ENCODE measurements at regions of chr2 and their contacts with region 1.

Region 1: GRCh38 chr2:217756375-217757107 is 246.3 kb downstream of the TNS1 start:
- DNase-seq: peak; percentile 29
- ATAC-seq: peak; percentile 95
- H3K4me3 ChIP-seq: no peak overlapping the region
- H3K27ac ChIP-seq: no peak overlapping the region
- H3K4me1 ChIP-seq: no peaks in the 10 kb centered on the region
- H3K27me3 ChIP-seq: peaks cover 1 to 20% of the 10 kb centered on the region in 2 experiments; a peak in 3 of 5 replicates
- CTCF ChIP-seq: peak; percentile 89
- EP300 ChIP-seq: no peak
- POLR2A ChIP-seq: no peak
- RAD21 ChIP-seq: peak; percentile 66

Region 2: GRCh38 chr2:216687646-216688045 is 1068.9 kb before region 1 on chr2:
- CTCF ChIA-PET with region 1: interaction called, 7 read pairs
- POLR2A ChIA-PET with region 1: no interaction called
- in situ Hi-C with region 1: loop called (anchors 10 kb)
- intact Hi-C with region 1: loop called (anchors 5 kb)
- DNase-seq: peak; percentile 13
- ATAC-seq: peak; percentile 69
- H3K4me3 ChIP-seq: no peak overlapping the region
- H3K27ac ChIP-seq: no peak overlapping the region
- H3K4me1 ChIP-seq: no peaks in the 10 kb centered on the region
- H3K27me3 ChIP-seq: peaks cover 20 to 40% of the 10 kb centered on the region in 2 experiments
- CTCF ChIP-seq: peak; percentile 58
- EP300 ChIP-seq: no peak
- POLR2A ChIP-seq: no peak
- RAD21 ChIP-seq: 0 out of 2 replicates have a peak, but pooled peaks have one; percentile 26

Region 3: DNA sequence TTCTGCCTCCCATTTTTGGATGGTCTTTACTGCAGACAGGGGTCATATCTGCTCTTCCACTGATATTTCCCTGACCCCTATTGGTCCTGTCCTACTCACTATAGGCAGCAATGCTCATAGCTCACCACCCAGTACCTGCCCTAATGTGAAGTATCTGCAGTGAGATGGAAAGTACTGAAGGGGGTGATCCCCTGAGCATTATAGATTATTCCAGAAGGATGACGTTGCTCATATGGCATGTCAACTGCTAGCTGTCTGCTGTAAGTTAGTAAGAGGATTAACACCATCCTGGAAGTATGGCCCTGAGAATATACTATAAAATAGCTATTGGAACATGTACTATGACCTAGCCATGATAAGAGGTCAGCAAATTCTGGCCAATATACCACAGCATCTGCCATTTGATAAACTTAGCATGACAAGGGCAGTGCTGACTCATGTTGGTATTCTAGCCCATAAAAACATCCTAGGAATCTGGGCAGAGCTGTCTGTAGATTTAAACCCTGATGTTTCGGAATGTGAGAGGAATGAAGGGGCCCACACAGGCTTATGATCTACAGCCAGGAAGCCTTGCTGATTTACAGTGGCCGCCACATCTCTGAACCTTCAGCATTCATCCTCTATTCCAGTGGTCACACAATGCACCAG is 205.2 kb before region 1 on chr2:
- CTCF ChIA-PET with region 1: no interaction called
- POLR2A ChIA-PET with region 1: no interaction called
- in situ Hi-C with region 1: no loop called
- intact Hi-C with region 1: no loop called
- DNase-seq: peak; percentile 20
- ATAC-seq: no peak; the same call in 1 of the 3 replicates
- H3K4me3 ChIP-seq: no peak overlapping the region
- H3K27ac ChIP-seq: no peak overlapping the region
- H3K4me1 ChIP-seq: no peaks in the 10 kb centered on the region
- H3K27me3 ChIP-seq: peaks cover 0 to 14% of the 10 kb centered on the region in 2 experiments; a peak in 2 of 5 replicates
- CTCF ChIP-seq: no peak
- EP300 ChIP-seq: no peak
- POLR2A ChIP-seq: no peak
- RAD21 ChIP-seq: no peak

Measured in HepG2 (cell line).